ENCODE measurements at regions of chr12 and their contacts with region 1.

Region 1: DNA sequence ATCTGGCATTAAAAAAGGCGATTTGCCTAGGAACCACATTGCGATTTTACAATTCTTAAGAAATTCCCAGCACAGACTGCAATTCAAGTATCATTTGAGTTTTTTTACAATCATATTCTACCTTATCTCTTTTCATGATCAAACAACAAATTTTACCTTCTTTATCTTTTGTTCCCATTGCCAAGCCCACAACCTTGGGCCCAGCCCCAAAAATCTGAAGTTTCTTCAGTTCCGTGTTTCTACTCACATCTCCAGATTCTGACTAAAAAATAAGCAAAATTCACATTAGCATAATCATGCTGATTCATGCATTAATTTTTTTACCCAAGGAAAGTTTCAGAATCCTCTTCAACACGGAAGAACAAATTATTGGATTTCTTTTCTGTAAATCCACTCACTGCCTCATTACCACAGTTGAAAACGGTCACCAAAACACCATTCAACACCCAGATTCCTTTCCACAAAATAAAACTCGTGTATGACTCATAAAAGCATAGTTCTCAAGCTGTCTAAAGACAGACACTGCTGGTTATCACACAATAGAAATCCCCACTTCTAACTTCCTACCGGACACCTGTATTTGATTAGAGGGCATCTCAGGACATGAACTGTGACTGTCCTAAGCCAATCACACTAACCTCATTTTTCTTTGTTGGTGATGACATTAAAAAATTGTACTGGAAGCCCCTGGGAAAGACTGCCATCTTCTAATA is 32.7 kb downstream of the KDM5A start:
- DNase-seq: no peak
- ATAC-seq: no peak
- H3K4me3 ChIP-seq: no peak overlapping the region
- H3K27ac ChIP-seq: no peak overlapping the region
- H3K4me1 ChIP-seq: peaks cover 3% of the 10 kb centered on the region; the same call in 1 of the 2 replicates
- H3K27me3 ChIP-seq: no peaks in the 10 kb centered on the region
- CTCF ChIP-seq: no peak

Region 2: GRCh38 chr12:332581-333205 is 23.7 kb before region 1 on chr12:
- CTCF ChIA-PET with region 1: no interaction called
- POLR2A ChIA-PET with region 1: interaction called, 15 read pairs
- intact Hi-C with region 1: no loop called
- DNase-seq: no peak
- ATAC-seq: no peak
- H3K4me3 ChIP-seq: no peak overlapping the region
- H3K27ac ChIP-seq: no peak overlapping the region
- H3K4me1 ChIP-seq: no peaks in the 10 kb centered on the region
- H3K27me3 ChIP-seq: no peaks in the 10 kb centered on the region
- CTCF ChIP-seq: no peak

Region 3: DNA sequence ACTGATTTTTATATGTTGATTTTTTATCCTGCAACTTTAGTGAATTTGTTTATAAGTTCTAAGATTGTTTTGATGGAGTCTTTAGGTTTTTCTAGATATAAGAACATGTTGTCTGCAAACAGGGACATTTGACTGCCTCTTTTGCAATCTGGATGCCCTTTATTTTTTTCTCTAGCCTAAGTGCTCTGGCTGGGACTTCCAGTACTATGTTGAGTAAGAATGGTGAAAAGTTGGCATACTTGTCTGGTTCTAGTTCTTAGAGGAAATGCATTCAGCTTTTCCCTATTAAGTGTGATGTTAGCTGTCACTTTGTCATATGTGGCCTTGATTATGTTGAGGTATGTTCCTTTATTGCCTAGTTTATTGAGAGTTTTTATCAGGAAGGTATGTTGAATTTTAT is 702.7 kb after region 1 on chr12:
- CTCF ChIA-PET with region 1: no interaction called
- POLR2A ChIA-PET with region 1: no interaction called
- intact Hi-C with region 1: no loop called
- DNase-seq: no peak
- ATAC-seq: no peak
- H3K4me3 ChIP-seq: no peak overlapping the region
- H3K27ac ChIP-seq: no peak overlapping the region
- H3K4me1 ChIP-seq: no peaks in the 10 kb centered on the region
- H3K27me3 ChIP-seq: no peaks in the 10 kb centered on the region
- CTCF ChIP-seq: no peak

Measured in PC-3 (cell line).